Adrenal gland (tissue), 19 donors: ENCODE measurements at regions of chr22 and their contacts with region 1.

Region 1: DNA sequence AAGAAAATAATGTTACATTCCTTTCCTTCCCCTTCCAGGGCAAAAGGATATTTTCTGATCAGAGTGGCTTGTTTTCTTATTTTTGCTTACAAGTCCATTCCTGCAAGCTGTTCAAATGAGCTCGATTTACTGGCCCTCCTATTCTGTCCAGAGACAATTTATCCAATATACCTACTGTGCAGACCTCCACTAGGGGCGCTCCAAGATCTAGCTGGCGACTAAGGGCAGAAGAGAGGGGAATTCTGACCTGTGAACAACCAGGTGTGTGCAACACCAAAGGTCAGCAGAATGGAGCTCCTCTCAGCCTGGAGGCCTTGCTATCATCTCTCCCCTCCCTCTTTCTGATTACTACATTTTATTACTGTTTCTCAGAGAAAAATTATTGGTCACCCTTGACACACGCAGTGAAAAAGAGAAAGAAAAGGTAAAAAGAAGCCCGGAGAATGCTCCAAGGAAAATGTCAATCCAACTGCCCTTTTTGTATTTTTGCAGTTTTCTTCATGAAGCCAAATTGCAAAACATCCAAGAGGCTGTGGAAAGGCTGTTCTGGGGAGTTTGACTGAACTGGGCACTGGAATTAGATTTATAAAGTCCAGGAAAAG is 3.2 kb downstream of the SEZ6L start:
- DNase-seq: peak; percentile 23 to 80 (median 56)
- H3K4me3 ChIP-seq: no peak overlapping the region
- H3K27ac ChIP-seq: no peak overlapping the region
- H3K4me1 ChIP-seq: peaks cover 5 to 12% of the 10 kb centered on the region in 2 donors
- H3K27me3 ChIP-seq: peaks cover 42% of the 10 kb centered on the region
- CTCF ChIP-seq: peak; percentile 45 to 70 (median 55)
- POLR2A ChIP-seq: no peak

Region 2: DNA sequence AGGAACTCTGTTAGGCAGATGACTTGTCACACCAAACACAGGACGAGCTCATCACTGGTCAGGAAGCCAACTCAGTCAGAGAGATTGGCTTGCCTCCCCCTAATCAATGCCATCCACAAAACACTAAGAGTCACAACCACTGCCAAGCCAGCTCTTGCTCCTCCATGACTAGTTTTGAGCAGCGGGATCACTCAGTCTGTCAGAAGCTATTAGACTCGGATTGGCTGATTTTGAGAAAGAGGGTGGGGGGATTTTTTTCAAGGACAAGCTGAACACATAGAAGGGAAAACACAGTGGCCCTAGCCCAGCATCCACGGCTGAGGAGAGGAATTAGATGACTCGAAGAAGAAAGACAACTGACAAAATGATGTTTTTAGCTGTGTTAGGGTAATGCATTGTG is 52.7 kb after region 1 on chr22:
- intact Hi-C with region 1: no loop called
- DNase-seq: no peak
- H3K4me3 ChIP-seq: no peak overlapping the region
- H3K27ac ChIP-seq: no peak overlapping the region
- H3K4me1 ChIP-seq: no peaks in the 10 kb centered on the region
- H3K27me3 ChIP-seq: peaks cover 3% of the 10 kb centered on the region
- CTCF ChIP-seq: no peak
- POLR2A ChIP-seq: no peak

Region 3: DNA sequence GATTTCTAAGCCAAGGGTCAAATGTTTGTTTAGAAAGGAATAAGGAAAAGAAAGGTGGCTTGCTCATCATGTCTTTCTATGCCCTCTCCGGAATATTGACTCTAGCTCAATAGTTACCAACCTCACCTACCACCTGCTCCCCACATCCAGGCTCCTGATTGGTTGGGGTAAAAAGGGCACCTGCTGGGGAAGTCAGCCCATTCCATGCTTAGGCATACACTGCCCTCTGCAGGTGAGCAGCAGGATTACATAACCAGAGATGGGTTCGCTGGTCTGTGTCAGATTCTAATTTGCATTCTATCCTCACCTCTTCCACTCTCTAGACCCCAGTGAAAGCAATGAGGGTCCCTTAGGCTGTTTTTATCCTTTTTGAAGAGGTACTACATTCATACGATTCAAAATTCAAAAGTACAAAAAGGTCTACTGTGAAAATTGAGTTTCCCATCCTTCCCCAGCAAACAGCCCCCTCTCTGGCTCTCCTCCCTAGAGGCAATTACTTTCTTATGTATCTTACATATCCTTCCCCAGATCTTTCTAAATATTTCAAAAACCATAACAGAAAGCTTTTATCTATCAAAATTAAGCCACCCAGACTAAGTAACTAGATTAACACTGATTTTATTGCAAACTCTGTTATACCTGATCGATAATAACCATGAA is 158.6 kb after region 1 on chr22:
- intact Hi-C with region 1: loop called in 1 of 2 experiments (anchors 5 kb)
- DNase-seq: peak; percentile 30 to 81 (median 46)
- H3K4me3 ChIP-seq: no peak overlapping the region
- H3K27ac ChIP-seq: no peak overlapping the region
- H3K4me1 ChIP-seq: no peaks in the 10 kb centered on the region
- H3K27me3 ChIP-seq: peaks cover 9% of the 10 kb centered on the region
- CTCF ChIP-seq: peak; percentile 76 to 85 (median 81)
- POLR2A ChIP-seq: no peak